BJ (cell line): ENCODE measurements at regions of chr4 and their contacts with region 1.

Region 1: DNA sequence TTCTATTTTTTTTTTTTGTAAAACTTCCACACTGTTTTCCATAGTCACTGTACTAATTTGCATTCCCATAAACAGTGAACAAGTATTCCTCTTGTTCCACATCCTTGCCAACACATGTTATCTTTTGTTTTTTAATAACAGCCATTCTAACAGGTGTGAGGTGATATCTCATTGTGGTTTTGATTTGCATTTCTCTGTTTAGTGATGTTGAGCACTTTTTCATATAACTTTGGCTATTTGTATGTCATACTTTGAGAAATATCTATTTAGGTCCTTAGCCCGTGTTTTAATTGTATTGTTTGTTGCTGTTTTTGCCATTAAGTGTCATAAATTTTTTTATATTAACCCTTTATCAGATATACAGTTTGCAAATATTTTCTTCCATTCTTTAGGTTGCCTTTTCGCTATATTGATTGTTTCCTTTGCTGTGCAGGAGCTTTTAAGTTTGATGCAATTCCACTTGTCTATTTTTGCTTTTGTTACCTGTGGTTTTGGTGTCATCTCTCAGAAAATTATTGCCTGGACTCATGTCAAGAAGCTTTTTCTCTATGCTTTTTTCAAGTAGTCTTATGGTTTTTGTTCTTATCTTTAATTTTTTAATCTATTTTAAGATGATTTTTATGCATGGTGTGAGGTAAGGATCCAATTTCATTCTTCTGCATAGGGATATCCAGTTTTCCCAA is 27.9 kb upstream of the NDNF start:
- DNase-seq: no peak
- H3K4me3 ChIP-seq: no peak overlapping the region
- H3K27me3 ChIP-seq: no peaks in the 10 kb centered on the region
- CTCF ChIP-seq: no peak

Region 2: DNA sequence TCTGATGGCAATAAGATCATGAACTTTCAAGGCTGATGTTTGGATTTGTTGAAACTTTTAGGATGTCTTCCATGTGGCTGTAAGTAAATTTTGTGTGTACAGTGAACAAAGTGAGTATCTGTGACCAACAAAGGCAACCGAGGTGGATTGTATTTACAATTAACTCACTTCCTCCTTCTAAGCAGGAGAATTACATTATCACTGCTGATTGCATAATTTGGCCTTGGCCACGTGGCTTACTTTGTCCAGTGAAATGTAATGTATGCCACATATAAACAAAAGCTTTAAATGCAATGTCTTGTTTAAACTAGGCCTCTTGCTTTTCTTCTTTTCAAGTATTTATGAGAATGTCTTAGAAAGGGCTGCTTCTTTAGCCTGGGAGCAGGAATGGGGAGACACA is 967.3 kb before region 1 on chr4:
- CTCF ChIA-PET with region 1: no interaction called
- POLR2A ChIA-PET with region 1: interaction called, 10 read pairs
- DNase-seq: no peak
- H3K4me3 ChIP-seq: no peak overlapping the region
- H3K27me3 ChIP-seq: no peaks in the 10 kb centered on the region
- CTCF ChIP-seq: no peak

Region 3: GRCh38 chr4:121070696-121071639 is 29.3 kb before region 1 on chr4:
- CTCF ChIA-PET with region 1: no interaction called
- POLR2A ChIA-PET with region 1: no interaction called
- DNase-seq: no peak
- H3K4me3 ChIP-seq: peak overlapping the region; percentile 40
- H3K27me3 ChIP-seq: peaks cover 32% of the 10 kb centered on the region
- CTCF ChIP-seq: peak; percentile 46